Activated CD4-positive, alpha-beta memory T cell treated with anti-CD3 and anti-CD28 coated beads for 36 hours (primary cell): ENCODE measurements at regions of chr13 and their contacts with region 1.

Region 1: GRCh38 chr13:32267836-32268439 is 47.2 kb downstream of the ZAR1L start:
- DNase-seq: peak; percentile 69
- H3K4me3 Mint-ChIP-seq: no peak overlapping the region
- H3K27ac Mint-ChIP-seq: no peak overlapping the region
- H3K4me1 Mint-ChIP-seq: peaks cover 6% of the 10 kb centered on the region
- H3K27me3 Mint-ChIP-seq: no peaks in the 10 kb centered on the region

Region 2: DNA sequence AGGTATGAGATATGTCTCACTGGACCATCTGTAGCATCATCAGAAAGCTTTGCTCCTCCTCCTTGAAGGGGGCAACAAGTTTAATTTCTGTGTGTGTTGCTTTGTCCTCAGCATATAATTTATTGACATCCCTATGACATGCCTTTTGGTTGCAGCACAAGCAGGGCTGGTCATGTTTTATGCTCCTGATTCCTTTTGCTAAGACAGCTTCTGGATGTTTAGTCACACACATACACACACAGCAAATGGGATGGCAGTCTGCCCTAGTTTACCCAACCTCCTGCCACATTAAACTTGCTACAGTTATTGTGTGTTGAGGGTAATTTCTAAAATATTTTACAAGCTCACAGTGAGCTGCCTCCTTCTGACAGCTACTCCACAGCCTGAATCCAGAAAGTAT is 746.5 kb before region 1 on chr13:
- CTCF ChIA-PET with region 1: no interaction called
- POLR2A ChIA-PET with region 1: no interaction called
- intact Hi-C with region 1: no loop called
- DNase-seq: no peak
- H3K4me3 Mint-ChIP-seq: no peak overlapping the region
- H3K27ac Mint-ChIP-seq: no peak overlapping the region
- H3K4me1 Mint-ChIP-seq: no peaks in the 10 kb centered on the region
- H3K27me3 Mint-ChIP-seq: no peaks in the 10 kb centered on the region

Region 3: GRCh38 chr13:32255724-32256109 is 12.2 kb before region 1 on chr13:
- CTCF ChIA-PET with region 1: no interaction called
- POLR2A ChIA-PET with region 1: no interaction called
- intact Hi-C with region 1: no loop called
- DNase-seq: no peak
- H3K4me3 Mint-ChIP-seq: no peak overlapping the region
- H3K27ac Mint-ChIP-seq: no peak overlapping the region
- H3K4me1 Mint-ChIP-seq: no peaks in the 10 kb centered on the region
- H3K27me3 Mint-ChIP-seq: no peaks in the 10 kb centered on the region

Region 4: DNA sequence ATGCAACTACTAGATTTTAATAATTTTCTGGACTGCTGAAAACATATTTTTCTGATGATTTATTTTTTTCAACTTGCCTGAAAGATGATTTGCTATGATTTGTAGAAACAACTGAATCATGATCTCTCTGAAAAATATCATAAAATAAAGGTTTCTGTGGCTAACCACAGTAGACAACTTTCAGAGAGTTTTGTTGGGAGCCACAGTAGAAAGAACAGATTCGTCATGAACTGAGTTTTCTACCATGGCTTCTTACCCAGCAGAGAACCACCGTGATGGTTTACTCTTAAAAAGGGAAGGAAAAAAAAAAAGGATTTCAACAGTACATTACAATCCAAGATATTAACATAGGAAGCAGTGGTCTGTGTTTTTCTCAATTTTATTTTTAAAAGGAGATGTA is 29.3 kb after region 1 on chr13:
- CTCF ChIA-PET with region 1: interaction called, 3 read pairs
- POLR2A ChIA-PET with region 1: no interaction called
- intact Hi-C with region 1: loop called (anchors 1 kb)
- DNase-seq: no peak
- H3K4me3 Mint-ChIP-seq: no peak overlapping the region
- H3K27ac Mint-ChIP-seq: no peak overlapping the region
- H3K4me1 Mint-ChIP-seq: peaks cover 20% of the 10 kb centered on the region
- H3K27me3 Mint-ChIP-seq: peaks cover 7% of the 10 kb centered on the region

Region 5: DNA sequence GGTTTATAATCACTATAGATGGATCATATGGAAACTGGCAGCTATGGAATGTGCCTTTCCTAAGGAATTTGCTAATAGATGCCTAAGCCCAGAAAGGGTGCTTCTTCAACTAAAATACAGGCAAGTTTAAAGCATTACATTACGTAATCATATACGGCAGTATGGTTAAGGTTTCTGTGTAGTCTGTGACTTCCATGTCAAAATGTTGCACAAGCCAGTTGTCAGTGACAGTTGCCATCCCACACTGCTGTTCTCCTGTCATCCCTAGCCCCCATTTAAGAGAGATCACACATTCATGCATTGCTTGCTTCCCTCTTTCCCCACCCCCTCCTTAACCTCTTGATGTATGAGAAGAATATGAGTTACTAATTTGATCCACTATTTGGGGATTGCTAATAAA is 94.6 kb after region 1 on chr13:
- CTCF ChIA-PET with region 1: no interaction called
- POLR2A ChIA-PET with region 1: no interaction called
- intact Hi-C with region 1: no loop called
- DNase-seq: no peak
- H3K4me3 Mint-ChIP-seq: no peak overlapping the region
- H3K27ac Mint-ChIP-seq: no peak overlapping the region
- H3K4me1 Mint-ChIP-seq: no peaks in the 10 kb centered on the region
- H3K27me3 Mint-ChIP-seq: no peaks in the 10 kb centered on the region

Region 6: GRCh38 chr13:32443111-32443510 is 175.2 kb after region 1 on chr13:
- CTCF ChIA-PET with region 1: no interaction called
- POLR2A ChIA-PET with region 1: no interaction called
- intact Hi-C with region 1: loop called (anchors 2 kb)
- DNase-seq: peak; percentile 51
- H3K4me3 Mint-ChIP-seq: no peak overlapping the region
- H3K27ac Mint-ChIP-seq: no peak overlapping the region
- H3K4me1 Mint-ChIP-seq: peaks cover 9% of the 10 kb centered on the region
- H3K27me3 Mint-ChIP-seq: no peaks in the 10 kb centered on the region